Mammary epithelial cell (primary cell): ENCODE measurements at regions of chr4 and their contacts with region 1.

Region 1: GRCh38 chr4:26131711-26132110 is 189.1 kb upstream of the RBPJ start:
- DNase-seq: no peak
- H3K4me3 ChIP-seq: no peak overlapping the region
- H3K27ac ChIP-seq: no peak overlapping the region
- H3K4me1 ChIP-seq: peaks cover 15% of the 10 kb centered on the region
- H3K27me3 ChIP-seq: no peaks in the 10 kb centered on the region
- CTCF ChIP-seq: no peak

Region 2: GRCh38 chr4:26061248-26061986 is 70.3 kb before region 1 on chr4:
- CTCF ChIA-PET with region 1: no interaction called
- dilution Hi-C with region 1: no loop called
- in situ Hi-C with region 1: no loop called
- intact Hi-C with region 1: loop called (anchors 2 kb)
- DNase-seq: peak; percentile 32
- H3K4me3 ChIP-seq: no peak overlapping the region
- H3K27ac ChIP-seq: no peak overlapping the region
- H3K4me1 ChIP-seq: peaks cover 4% of the 10 kb centered on the region
- H3K27me3 ChIP-seq: peaks cover 6% of the 10 kb centered on the region
- CTCF ChIP-seq: peak; percentile 49 to 64

Region 3: GRCh38 chr4:26093551-26093950 is 38.2 kb before region 1 on chr4:
- CTCF ChIA-PET with region 1: no interaction called
- dilution Hi-C with region 1: no loop called
- in situ Hi-C with region 1: no loop called
- intact Hi-C with region 1: no loop called
- DNase-seq: no peak
- H3K4me3 ChIP-seq: no peak overlapping the region
- H3K27ac ChIP-seq: no peak overlapping the region
- H3K4me1 ChIP-seq: no peaks in the 10 kb centered on the region
- H3K27me3 ChIP-seq: no peaks in the 10 kb centered on the region
- CTCF ChIP-seq: no peak